Left ventricle myocardium superior (tissue), 1 donor: ENCODE measurements at regions of chr21 and their contacts with region 1.

Region 1: DNA sequence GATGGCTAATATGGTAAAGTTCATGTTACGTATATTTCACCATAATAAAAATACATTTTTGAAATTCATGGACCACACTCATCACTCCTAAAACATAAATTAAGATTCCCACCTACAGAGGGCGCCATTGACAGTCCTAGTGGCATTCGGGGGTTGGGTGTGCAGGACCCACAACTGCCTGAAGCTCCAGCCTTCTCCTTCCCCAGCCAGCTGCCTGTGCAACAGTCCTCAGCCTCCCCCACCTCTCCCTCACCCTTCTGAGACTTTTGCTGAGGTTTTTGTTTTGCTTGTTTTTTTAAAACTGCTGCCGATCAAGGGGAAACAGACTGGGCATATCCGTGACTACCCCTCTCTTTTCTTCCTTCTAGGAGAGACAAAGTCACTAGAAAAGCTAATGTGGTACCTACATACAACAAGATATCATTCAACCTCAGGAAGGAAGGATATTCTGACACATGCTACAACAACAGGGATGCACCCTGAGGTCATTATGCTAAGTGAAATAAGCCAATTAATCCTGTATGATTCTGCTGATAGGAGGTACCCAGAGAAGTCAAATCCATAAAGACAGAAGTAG is 9.2 kb upstream of the EVA1C start:
- DNase-seq: peak; percentile 57
- ATAC-seq: peak; percentile 83

Region 2: DNA sequence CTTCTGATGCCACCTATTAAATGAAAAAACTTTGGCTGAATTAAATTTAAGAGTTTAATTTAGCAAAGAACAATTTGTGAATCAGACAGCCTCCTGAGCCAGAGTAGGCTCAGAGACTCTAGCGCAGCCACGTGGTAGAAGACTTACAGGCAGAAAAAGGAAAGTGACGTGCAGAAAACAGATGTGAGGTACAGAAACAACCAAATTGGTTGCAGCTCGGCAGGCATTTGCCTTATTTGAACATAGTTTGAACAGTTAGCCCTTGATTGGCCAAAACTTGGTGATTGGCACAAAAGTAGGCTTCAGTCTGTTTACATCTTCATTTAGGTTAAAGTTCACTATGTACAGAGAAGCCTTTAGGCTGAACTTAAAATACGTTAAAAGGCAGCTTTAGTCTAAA is 159.1 kb after region 1 on chr21:
- intact Hi-C with region 1: loop called (anchors 2 kb)
- DNase-seq: no peak
- ATAC-seq: peak; percentile 74

Region 3: GRCh38 chr21:32597205-32597604 is 193.9 kb after region 1 on chr21:
- intact Hi-C with region 1: loop called (anchors 2 kb)
- DNase-seq: no peak
- ATAC-seq: no peak

Region 4: DNA sequence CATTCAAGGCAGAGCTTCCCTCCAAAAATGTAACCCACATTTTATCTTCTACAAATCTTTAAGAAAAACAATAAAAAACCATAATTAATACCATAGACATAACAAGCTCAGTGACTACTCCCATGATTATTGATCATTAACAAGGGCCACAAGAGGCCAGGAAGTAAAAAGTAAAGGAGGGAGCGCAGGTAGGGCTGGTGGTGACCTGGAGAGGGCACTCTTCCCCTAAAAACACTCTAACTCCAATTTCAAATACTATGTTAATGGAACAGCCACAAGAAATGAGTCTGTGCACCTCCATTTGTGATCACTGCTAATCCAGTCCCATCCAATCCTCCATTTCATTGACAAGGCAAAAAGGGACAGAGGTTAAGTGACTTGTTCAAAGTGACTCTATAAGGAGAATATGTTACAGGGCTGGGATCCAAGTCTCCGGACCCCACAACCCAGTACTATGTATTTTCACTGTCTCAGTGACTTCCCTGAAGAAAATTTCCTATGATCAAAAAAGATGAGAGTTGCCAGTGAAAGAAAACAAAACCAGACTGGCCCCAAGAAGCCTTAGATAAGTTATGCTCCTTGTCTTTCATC is 250.1 kb after region 1 on chr21:
- intact Hi-C with region 1: no loop called
- DNase-seq: no peak
- ATAC-seq: peak; percentile 22